ENCODE measurements at regions of chr14 and their contacts with region 1.

Region 1: GRCh38 chr14:68140111-68140741 is 320.6 kb downstream of the RAD51B start:
- DNase-seq: no peak
- ATAC-seq: no peak

Region 2: GRCh38 chr14:67943947-67944346 is 196.3 kb before region 1 on chr14:
- intact Hi-C with region 1: loop called (anchors 5 kb)
- DNase-seq: no peak
- ATAC-seq: peak; percentile 59

Region 3: DNA sequence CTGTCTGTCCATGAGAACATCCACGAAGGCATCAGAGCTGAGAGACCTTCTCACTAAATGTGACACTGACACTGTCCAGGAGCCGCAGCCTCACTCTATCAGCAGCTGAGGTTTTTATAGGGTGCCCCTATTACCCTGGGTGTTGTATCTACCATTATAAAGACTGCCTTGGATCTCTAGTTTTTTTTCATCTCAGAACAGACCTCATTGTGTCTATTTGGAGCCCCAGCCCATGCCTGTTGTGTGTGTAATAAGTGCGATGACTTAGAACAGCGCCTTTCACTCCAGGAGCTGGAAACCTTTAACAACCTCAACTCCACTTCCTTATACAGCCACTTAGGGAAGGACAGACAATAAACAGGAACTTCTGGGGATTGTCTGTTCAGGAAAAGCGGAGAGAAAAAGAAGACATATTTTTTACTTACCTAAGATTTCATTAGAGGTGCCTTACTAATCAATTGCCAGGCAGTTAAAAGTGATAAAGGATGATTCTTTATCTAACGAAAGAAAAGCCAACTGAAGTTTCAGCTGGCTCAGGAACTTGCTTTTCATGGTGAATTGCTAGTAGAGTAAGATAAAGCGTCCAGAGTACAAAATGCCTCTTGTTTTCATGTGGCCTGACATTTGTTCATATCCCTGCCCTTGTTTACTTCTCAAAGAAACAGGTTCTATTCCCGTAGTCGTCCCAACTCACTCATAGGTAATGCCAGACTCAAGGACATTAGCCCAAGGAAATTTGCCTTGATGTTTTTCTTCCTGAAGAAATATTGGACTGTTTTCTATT is 100.0 kb after region 1 on chr14:
- intact Hi-C with region 1: loop called (anchors 5 kb)
- DNase-seq: no peak
- ATAC-seq: no peak

Region 4: DNA sequence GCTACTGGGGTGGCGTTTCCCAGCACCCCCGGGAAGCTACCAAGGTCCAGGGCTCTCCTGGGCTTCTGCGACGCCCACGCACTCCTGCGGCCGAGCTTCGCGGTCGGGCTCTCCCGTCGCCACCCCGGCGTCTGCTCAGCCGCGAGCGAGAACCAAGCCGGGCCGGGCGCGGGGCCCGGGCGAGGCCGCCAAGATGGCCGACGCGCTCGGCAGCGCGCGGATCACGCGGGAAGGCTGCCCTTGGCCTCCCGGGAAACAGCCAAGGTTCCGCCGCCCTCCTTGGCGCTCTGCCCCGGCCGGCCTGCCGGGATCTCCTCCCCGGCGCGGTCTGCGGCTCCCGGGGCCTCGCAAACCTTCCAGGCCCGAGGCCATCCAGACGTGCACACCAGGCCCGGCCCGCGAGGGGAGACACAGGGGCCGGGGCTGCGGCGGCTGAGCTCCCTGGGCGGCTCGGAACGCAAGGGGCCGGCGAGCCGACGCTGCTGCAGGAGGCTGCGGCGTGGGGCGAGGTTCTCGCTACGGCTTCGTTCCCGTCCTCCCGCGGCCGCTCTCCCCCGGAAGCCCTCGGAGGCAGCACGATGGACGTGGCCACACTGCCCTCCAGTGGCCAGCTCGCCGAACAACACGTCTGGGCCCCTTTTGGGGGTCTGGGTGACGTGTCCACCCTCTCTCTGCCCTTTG is 676.2 kb after region 1 on chr14:
- intact Hi-C with region 1: loop called (anchors 10 kb)
- DNase-seq: peak; percentile 96
- ATAC-seq: peak; percentile 94